Calu3 (cell line): ENCODE measurements at regions of chr4 and their contacts with region 1.

Region 1: DNA sequence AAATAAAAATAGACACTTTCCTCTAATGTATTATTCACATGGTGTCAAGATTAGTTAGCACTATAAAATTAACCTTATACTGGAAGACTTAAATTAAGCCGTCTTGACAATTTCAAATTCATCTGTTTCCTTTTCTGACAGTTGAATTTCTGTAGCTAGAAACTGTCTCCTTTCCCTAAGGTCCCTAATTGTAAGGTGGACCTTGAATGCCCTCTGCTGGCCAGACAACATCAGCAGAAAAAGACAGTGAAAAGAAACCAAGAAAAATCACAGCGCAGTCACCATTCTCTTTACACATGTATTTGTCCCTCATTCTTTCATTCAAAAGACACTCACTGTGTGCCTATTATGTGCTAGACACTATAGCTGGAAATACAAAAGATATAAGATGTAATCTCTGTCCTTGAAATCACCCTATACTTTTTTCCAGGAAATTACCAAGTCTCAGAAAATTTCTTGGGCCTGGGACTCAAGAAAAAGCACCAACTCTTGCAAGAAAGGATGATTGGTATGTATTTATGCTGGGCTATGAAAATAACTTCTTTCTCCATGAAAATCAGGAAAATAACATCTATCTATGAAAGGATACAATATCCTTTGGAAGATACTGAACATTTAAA is 32.7 kb upstream of the AMBN start:
- DNase-seq: peak; percentile 53
- H3K4me3 Mint-ChIP-seq: peak overlapping the region; percentile 50
- H3K27ac Mint-ChIP-seq: peak overlapping the region; percentile 60
- H3K4me1 Mint-ChIP-seq: peaks cover 8% of the 10 kb centered on the region
- H3K27me3 Mint-ChIP-seq: no peaks in the 10 kb centered on the region
- CTCF ChIP-seq: peak; percentile 36

Region 2: DNA sequence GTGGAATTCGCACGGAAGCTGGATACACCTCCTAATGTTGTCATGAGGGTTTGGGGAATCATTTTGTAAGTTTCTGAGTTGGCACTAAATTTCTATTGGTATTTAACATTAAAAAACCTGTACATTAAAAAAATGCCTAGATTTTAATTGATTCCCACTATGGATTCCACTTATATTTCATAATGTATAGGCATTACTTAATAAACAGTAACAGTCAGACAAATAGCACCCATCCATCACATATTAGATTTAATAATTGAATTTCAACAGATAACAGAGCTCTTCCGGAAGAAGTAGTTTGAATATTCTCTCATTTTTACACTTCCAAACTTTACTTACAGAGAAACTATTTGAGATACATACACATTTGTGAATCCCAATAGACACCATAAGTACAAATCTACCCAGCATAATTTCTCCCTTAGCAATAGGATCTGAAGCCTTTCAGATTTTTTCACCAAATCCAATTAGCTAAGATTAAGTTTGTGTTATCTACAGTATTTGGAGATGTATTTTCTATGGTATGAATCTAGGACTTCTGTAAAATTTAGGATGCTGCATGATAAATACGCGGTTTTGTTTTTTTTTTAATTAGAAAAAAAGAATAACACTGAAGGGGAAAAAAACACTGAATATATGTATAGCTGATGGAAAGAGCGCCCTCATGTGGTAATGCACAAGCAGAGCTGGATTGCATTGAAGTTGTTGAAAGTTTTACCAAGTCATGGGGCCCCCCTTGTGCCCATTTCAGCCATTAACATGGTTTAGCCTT is 376.0 kb before region 1 on chr4:
- CTCF ChIA-PET with region 1: no interaction called
- intact Hi-C with region 1: loop called (anchors 10 kb)
- DNase-seq: peak; percentile 60
- H3K4me3 Mint-ChIP-seq: peak overlapping the region; percentile 39
- H3K27ac Mint-ChIP-seq: peak overlapping the region; percentile 85
- H3K4me1 Mint-ChIP-seq: peaks cover 59% of the 10 kb centered on the region
- H3K27me3 Mint-ChIP-seq: no peaks in the 10 kb centered on the region
- CTCF ChIP-seq: peak; percentile 39

Region 3: GRCh38 chr4:70315928-70316327 is 243.4 kb before region 1 on chr4:
- CTCF ChIA-PET with region 1: no interaction called
- intact Hi-C with region 1: loop called (anchors 5 kb)
- DNase-seq: no peak
- H3K4me3 Mint-ChIP-seq: no peak overlapping the region
- H3K27ac Mint-ChIP-seq: no peak overlapping the region
- H3K4me1 Mint-ChIP-seq: no peaks in the 10 kb centered on the region
- H3K27me3 Mint-ChIP-seq: no peaks in the 10 kb centered on the region
- CTCF ChIP-seq: no peak